Heart right ventricle (tissue), 16 donors: ENCODE measurements at regions of chr3 and their contacts with region 1.

Region 1: DNA sequence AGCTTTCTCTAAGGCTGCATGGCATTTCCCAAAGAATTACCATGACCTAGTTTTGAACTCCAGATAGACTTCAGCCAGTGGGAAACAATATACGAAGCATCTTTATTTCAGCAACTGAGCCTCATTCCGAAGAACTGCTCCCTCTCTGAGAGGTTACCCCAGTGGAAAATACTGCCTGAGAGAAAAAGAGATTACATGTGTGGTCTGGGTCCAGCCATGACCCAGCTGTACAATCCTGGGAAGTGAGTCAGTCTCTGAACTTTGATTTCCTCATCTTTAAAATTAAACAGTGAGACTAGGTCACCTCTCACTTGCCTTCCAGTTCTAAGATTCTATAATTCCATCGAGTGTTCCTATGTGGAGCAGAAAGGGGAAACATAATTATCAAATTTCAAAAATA is 42.4 kb downstream of the TNIK start:
- DNase-seq: peak in 1 of 2 donors; percentile 16
- ATAC-seq: peak; percentile 52 to 92 (median 72)
- H3K4me3 ChIP-seq: no peak overlapping the region
- H3K27ac ChIP-seq: peak overlapping the region in 8 of 10 donors; percentile 1 to 63 (median 42)
- H3K4me1 ChIP-seq: peaks cover 0 to 62% (median 33%) of the 10 kb centered on the region in 9 donors
- H3K27me3 ChIP-seq: no peaks in the 10 kb centered on the region
- CTCF ChIP-seq: no peak

Region 2: DNA sequence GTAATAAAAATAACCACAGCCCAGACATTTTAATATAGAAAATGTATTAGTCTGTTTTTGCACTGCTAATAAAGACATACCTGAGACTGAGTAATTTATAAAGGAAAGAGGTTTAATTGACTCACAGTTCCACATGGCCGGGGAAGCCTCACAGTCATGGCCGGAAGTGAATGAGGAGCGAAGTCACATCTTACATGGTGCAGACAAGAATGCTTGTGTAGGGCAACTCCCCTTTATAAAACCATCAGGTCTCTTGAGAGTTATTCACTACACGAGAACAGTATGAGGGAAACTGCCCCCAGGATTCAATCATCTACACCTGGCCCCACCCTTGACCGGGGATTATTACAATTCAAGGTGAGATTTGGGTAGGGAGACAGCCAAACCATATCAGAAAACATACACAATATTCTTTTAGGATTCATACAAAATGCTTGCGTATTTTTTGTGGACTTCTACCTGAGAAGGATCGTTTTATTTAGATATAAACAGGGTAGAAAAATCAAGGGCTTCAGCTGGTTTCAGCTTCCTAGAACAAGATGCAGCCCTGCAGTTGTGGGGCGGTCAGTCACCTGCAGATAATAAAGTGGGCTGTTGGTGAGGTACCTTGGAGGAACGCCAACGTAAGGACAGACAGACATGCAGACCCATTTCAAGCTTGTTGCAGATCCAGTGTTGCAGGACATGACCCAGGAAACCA is 59.5 kb before region 1 on chr3:
- intact Hi-C with region 1: no loop called
- DNase-seq: no peak
- ATAC-seq: no peak
- H3K4me3 ChIP-seq: no peak overlapping the region
- H3K27ac ChIP-seq: no peak overlapping the region
- H3K4me1 ChIP-seq: peaks cover 0 to 21% (median 6%) of the 10 kb centered on the region in 9 donors
- H3K27me3 ChIP-seq: no peaks in the 10 kb centered on the region
- CTCF ChIP-seq: no peak

Region 3: GRCh38 chr3:171453178-171453886 is 35.5 kb after region 1 on chr3:
- intact Hi-C with region 1: loop called in 1 of 10 experiments (anchors 5 kb)
- DNase-seq: no peak
- ATAC-seq: peak in 1 of 8 donors; percentile 31
- H3K4me3 ChIP-seq: no peak overlapping the region
- H3K27ac ChIP-seq: peak overlapping the region in 5 of 10 donors; percentile 20 to 52 (median 40)
- H3K4me1 ChIP-seq: peaks cover 0 to 67% (median 38%) of the 10 kb centered on the region in 9 donors
- H3K27me3 ChIP-seq: peaks cover 0 to 4% (median 0%) of the 10 kb centered on the region in 7 donors
- CTCF ChIP-seq: peak in 6 of 9 donors; percentile 13 to 32 (median 16)

Region 4: DNA sequence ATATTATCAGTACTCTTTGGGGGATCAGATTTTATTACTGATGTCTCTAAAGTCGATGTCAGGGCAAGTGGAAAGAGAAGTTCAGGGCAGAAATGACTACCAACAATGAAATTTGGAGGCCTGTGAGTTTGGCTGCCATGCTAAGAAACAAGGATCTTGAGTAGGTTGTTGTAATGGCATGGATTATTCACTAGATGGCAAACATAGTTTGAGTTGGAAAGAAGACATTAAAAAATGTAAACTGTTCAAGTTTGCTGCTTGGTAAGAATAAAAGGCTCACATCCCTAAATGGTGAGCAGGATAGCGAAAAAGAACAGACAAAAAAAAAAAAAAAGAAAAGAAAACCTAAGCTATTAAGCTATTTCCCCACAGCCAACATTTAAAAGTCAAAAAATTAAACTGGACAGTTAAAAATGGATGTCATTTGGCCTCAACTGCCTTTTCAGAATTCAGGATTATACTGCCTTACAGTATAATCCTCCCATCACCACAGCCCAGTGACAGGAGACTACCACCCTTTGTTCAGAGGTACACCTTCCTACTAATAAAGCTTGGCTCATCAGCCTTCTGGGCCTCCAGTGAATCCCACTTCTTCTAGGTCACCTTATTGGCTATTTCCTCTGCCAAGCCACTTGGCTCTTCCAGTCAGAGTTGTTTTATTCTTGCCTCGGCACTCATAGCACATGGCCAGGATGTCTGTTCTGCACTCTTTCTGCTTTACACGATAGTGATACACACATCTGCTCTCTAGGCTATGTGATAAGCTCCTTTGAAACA is 228.7 kb after region 1 on chr3:
- intact Hi-C with region 1: no loop called
- DNase-seq: peak in 1 of 2 donors; percentile 57
- ATAC-seq: peak; percentile 57 to 88 (median 80)
- H3K4me3 ChIP-seq: no peak overlapping the region
- H3K27ac ChIP-seq: peak overlapping the region in 9 of 10 donors; percentile 37 to 82 (median 66)
- H3K4me1 ChIP-seq: peaks cover 0 to 65% (median 29%) of the 10 kb centered on the region in 9 donors
- H3K27me3 ChIP-seq: no peaks in the 10 kb centered on the region
- CTCF ChIP-seq: peak; percentile 40 to 76 (median 65)